Activated naive CD4-positive, alpha-beta T cell treated with anti-CD3 and anti-CD28 coated beads for 36 hours (primary cell): ENCODE measurements at regions of chr15 and their contacts with region 1.

Region 1: GRCh38 chr15:23642413-23643044 is 5.1 kb downstream of the MAGEL2 start:
- DNase-seq: peak; percentile 66
- H3K4me3 Mint-ChIP-seq: no peak overlapping the region
- H3K27ac Mint-ChIP-seq: no peak overlapping the region
- H3K4me1 Mint-ChIP-seq: no peaks in the 10 kb centered on the region
- H3K27me3 Mint-ChIP-seq: peaks cover 3% of the 10 kb centered on the region

Region 2: GRCh38 chr15:23835953-23836352 is 193.4 kb after region 1 on chr15:
- CTCF ChIA-PET with region 1: no interaction called
- intact Hi-C with region 1: no loop called
- DNase-seq: no peak
- H3K4me3 Mint-ChIP-seq: no peak overlapping the region
- H3K27ac Mint-ChIP-seq: no peak overlapping the region
- H3K4me1 Mint-ChIP-seq: no peaks in the 10 kb centered on the region
- H3K27me3 Mint-ChIP-seq: no peaks in the 10 kb centered on the region

Region 3: DNA sequence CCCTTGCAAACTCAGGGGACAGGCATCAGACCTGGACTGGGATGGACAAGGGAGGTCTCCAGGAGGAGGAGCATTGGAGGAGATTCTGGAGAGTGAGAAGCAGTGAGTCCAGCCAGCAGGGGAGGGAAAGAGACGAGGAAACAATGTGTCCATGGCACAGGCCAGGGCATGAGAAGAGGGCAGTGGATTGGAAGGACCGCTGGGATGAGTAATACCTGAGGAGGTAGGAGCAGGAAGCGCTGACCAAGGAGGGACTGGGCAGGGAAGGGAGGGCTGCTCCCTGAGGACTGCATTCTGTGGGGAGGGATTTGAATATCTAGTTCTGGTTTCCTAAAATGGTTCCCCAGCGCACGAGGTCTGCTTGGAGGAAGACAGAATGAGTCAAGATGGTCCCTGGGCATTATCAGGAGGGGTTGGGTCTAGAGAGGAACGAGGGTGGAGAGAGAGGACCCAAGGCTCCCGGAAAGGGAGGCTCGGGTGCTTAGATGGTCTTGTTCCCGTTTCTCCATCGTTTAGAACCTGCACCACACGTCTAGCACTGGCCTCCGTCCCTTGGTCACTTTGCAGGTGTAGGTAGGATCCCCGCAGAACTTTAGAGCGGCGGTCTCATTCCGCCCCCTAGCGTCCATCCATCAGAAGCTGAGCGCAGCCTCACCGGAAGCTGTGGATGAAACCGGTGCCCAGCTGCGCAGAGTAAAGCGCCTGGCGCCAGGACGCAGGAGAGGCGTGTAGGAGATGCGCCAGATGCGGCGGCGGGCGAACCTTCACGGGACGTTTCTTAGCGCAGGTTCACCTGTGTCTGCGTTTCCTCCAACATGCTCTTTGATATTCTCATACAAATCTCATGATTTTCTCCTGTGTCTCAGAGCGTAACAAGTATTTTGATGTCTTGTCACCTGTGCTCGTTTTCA is 235.2 kb after region 1 on chr15:
- CTCF ChIA-PET with region 1: interaction called, 3 read pairs
- intact Hi-C with region 1: loop called (anchors 2 kb)
- DNase-seq: peak; percentile 61
- H3K4me3 Mint-ChIP-seq: no peak overlapping the region
- H3K27ac Mint-ChIP-seq: no peak overlapping the region
- H3K4me1 Mint-ChIP-seq: no peaks in the 10 kb centered on the region
- H3K27me3 Mint-ChIP-seq: no peaks in the 10 kb centered on the region

Region 4: GRCh38 chr15:25501828-25502446 is 1859.4 kb after region 1 on chr15:
- CTCF ChIA-PET with region 1: interaction called, 3 read pairs
- intact Hi-C with region 1: loop called (anchors 5 kb)
- DNase-seq: peak; percentile 10
- H3K4me3 Mint-ChIP-seq: no peak overlapping the region
- H3K27ac Mint-ChIP-seq: no peak overlapping the region
- H3K4me1 Mint-ChIP-seq: no peaks in the 10 kb centered on the region
- H3K27me3 Mint-ChIP-seq: peaks cover 4% of the 10 kb centered on the region